MCF 10A (cell line): ENCODE measurements at regions of chr3 and their contacts with region 1.

Region 1: GRCh38 chr3:32143849-32144757 is 37.7 kb downstream of the GPD1L start:
- DNase-seq: peak; percentile 89
- H3K4me3 Mint-ChIP-seq: no peak overlapping the region
- H3K27ac Mint-ChIP-seq: no peak overlapping the region
- H3K4me1 Mint-ChIP-seq: peaks cover 6% of the 10 kb centered on the region
- H3K27me3 Mint-ChIP-seq: no peaks in the 10 kb centered on the region
- CTCF ChIP-seq: peak; percentile 57

Region 2: DNA sequence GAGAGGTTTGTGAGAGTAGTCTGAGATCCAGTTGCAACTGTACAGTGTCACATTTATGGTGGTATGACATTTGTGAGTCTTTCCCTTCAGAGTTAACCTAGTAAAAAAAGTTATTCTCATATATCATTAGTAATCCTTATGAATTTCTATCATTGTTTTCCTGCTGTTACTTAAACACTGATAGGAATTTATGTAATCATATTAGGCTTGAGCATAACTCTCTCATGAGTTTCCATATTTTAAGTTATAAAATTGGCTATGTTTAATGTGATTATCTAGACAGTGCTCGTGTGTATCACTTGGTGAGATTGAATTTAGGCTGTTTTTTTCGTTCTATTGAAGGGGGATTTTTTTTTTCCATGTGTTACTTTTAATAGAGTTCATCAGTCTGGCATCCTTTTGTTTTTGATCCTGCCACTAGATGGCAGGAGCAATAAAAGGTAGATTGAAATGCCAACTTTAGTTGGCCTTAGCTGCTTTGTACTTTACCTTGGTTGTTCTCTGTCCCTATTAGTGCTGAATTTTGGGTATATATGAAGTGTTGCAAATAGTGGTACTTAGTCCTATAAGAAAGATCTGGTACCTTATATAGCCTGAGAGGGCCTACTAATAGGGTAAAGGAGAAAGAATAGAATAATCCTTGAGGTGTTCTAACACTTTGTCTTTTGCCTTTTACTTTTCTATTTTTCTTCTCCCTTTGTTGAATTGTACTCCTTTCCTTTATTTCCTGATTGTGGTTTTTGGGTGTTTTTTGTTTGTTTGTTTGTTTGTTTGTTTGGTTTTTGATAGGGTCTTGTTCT is 593.5 kb before region 1 on chr3:
- CTCF ChIA-PET with region 1: interaction called, 3 read pairs
- POLR2A ChIA-PET with region 1: no interaction called
- intact Hi-C with region 1: loop called (anchors 10 kb)
- DNase-seq: peak; percentile 52
- H3K4me3 Mint-ChIP-seq: no peak overlapping the region
- H3K27ac Mint-ChIP-seq: no peak overlapping the region
- H3K4me1 Mint-ChIP-seq: peaks cover 43% of the 10 kb centered on the region
- H3K27me3 Mint-ChIP-seq: no peaks in the 10 kb centered on the region
- CTCF ChIP-seq: peak; percentile 52

Region 3: GRCh38 chr3:31858439-31858838 is 285.7 kb before region 1 on chr3:
- CTCF ChIA-PET with region 1: interaction called, 3 read pairs
- POLR2A ChIA-PET with region 1: no interaction called
- intact Hi-C with region 1: loop called (anchors 1 kb)
- DNase-seq: peak; percentile 45
- H3K4me3 Mint-ChIP-seq: no peak overlapping the region
- H3K27ac Mint-ChIP-seq: no peak overlapping the region
- H3K4me1 Mint-ChIP-seq: peaks cover 19% of the 10 kb centered on the region
- H3K27me3 Mint-ChIP-seq: no peaks in the 10 kb centered on the region
- CTCF ChIP-seq: no peak

Region 4: GRCh38 chr3:32026593-32026992 is 117.5 kb before region 1 on chr3:
- CTCF ChIA-PET with region 1: interaction called, 18 read pairs
- POLR2A ChIA-PET with region 1: interaction called, 4 read pairs
- intact Hi-C with region 1: no loop called
- DNase-seq: no peak
- H3K4me3 Mint-ChIP-seq: no peak overlapping the region
- H3K27ac Mint-ChIP-seq: no peak overlapping the region
- H3K4me1 Mint-ChIP-seq: no peaks in the 10 kb centered on the region
- H3K27me3 Mint-ChIP-seq: no peaks in the 10 kb centered on the region
- CTCF ChIP-seq: no peak

Region 5: DNA sequence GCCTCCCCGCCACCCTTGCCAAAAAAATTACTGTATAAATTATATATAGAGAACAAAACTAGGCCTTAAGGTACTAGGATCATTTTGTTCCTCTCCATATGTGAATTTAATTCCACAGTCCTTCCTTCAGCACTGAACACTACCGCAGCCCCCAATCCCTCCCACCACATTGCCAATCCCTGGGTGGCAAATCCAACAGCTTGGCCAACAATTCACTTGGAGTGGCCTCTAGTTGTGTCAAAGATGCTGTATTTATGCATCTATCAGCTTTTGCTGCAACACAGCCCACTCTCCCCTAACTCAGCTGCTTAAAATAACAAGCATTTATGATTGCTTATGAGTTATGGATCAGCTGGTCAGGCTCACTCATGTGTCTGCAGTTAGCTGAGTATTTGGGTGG is 19.1 kb before region 1 on chr3:
- CTCF ChIA-PET with region 1: interaction called, 10 read pairs
- POLR2A ChIA-PET with region 1: no interaction called
- intact Hi-C with region 1: no loop called
- DNase-seq: no peak
- H3K4me3 Mint-ChIP-seq: no peak overlapping the region
- H3K27ac Mint-ChIP-seq: no peak overlapping the region
- H3K4me1 Mint-ChIP-seq: peaks cover 6% of the 10 kb centered on the region
- H3K27me3 Mint-ChIP-seq: no peaks in the 10 kb centered on the region
- CTCF ChIP-seq: no peak